OCI-LY7 (cell line): ENCODE measurements at regions of chr17 and their contacts with region 1.

Region 1: GRCh38 chr17:1229432-1229899 is 40.8 kb upstream of the BHLHA9 start:
- DNase-seq: peak; percentile 85
- H3K4me3 ChIP-seq: peak overlapping the region; percentile 88
- H3K27ac ChIP-seq: peak overlapping the region; percentile 86
- H3K4me1 ChIP-seq: peaks cover 32% of the 10 kb centered on the region
- CTCF ChIP-seq: no peak

Region 2: GRCh38 chr17:1108861-1109605 is 120.4 kb before region 1 on chr17:
- CTCF ChIA-PET with region 1: no interaction called
- POLR2A ChIA-PET with region 1: no interaction called
- intact Hi-C with region 1: no loop called
- DNase-seq: peak; percentile 34
- H3K4me3 ChIP-seq: peak overlapping the region; percentile 49
- H3K27ac ChIP-seq: no peak overlapping the region
- H3K4me1 ChIP-seq: peaks cover 24% of the 10 kb centered on the region
- CTCF ChIP-seq: no peak

Region 3: GRCh38 chr17:1179818-1180742 is 49.4 kb before region 1 on chr17 and contains the start of gene ABR:
- CTCF ChIA-PET with region 1: interaction called, 3 read pairs
- POLR2A ChIA-PET with region 1: interaction called, 13 read pairs
- intact Hi-C with region 1: loop called (anchors 2 kb)
- DNase-seq: peak; percentile 62
- H3K4me3 ChIP-seq: peak within 1 kb of the TSS; percentile 74
- H3K27ac ChIP-seq: peak within 1 kb of the TSS; percentile 90
- H3K4me1 ChIP-seq: peaks cover 55% of the 10 kb centered on the region
- CTCF ChIP-seq: no peak
- total RNA-seq, gene ABR: 153 and 164 TPM in 2 replicates

Region 4: GRCh38 chr17:1399679-1400512 is 170.4 kb after region 1 on chr17 and contains the start of gene YWHAE:
- CTCF ChIA-PET with region 1: no interaction called
- POLR2A ChIA-PET with region 1: no interaction called
- intact Hi-C with region 1: no loop called
- DNase-seq: peak; percentile 95
- H3K4me3 ChIP-seq: peak within 1 kb of the TSS; percentile 97
- H3K27ac ChIP-seq: peak within 1 kb of the TSS; percentile 72
- H3K4me1 ChIP-seq: peaks cover 26% of the 10 kb centered on the region
- CTCF ChIP-seq: no peak
- total RNA-seq, gene YWHAE: 267 and 467 TPM in 2 replicates